Activated CD4-positive, alpha-beta T cell treated with anti-CD3 and anti-CD28 coated beads, Interleukin-2, amount 10 ng/mL, durations not matched to agents 7 days and 5 days (primary cell): ENCODE measurements at regions of chr11 and their contacts with region 1.

Region 1: GRCh38 chr11:15074206-15075161 is 1.1 kb downstream of the CALCB start:
- DNase-seq: peak; percentile 87
- H3K4me3 Mint-ChIP-seq: peak overlapping the region; percentile 72
- H3K27ac Mint-ChIP-seq: peak overlapping the region; percentile 55
- H3K4me1 Mint-ChIP-seq: peaks cover 19% of the 10 kb centered on the region
- H3K27me3 Mint-ChIP-seq: peaks cover 18% of the 10 kb centered on the region

Region 2: DNA sequence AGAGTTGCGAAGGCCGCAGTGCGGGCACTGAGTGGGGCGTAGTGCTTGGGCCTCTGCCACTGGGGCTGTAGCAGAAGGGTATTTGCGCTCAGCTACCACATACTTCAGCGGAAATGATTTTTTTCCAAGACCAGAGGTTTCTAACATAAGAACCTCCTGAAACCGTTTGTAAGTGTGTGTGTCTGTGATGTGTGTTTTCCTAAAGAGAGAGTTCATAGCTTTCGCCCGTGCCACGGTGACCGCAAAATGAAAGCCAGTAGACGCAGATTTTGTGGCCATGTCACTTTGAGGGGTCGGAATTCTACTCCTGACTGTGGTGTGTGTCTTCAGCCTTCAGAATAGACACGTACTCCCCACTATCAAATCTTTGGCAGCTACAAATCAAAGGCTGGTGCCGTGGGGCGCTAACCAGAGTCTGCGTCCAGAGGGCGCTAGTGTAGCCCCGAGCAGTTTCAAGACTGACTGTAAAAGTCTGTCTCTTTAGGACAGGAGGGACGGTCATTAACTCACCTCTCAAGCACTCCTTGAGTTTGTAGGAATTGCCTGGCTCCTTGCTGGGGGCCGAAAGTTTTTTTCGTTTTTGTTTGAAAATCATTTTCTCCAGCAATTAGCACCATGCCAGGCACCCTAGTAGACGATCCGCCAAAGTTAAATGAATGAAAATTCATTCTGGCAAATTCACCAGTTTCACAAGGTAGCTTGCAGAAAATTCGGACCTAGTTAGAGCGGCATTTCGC is 99.8 kb before region 1 on chr11:
- CTCF ChIA-PET with region 1: interaction called, 15 read pairs
- POLR2A ChIA-PET with region 1: no interaction called
- DNase-seq: peak; percentile 66
- H3K4me3 Mint-ChIP-seq: peak overlapping the region; percentile 53
- H3K27ac Mint-ChIP-seq: peak overlapping the region; percentile 21
- H3K4me1 Mint-ChIP-seq: peaks cover 32% of the 10 kb centered on the region
- H3K27me3 Mint-ChIP-seq: peaks cover 77% of the 10 kb centered on the region

Region 3: GRCh38 chr11:15059132-15059915 is 15.2 kb before region 1 on chr11:
- CTCF ChIA-PET with region 1: interaction called, 17 read pairs
- POLR2A ChIA-PET with region 1: no interaction called
- DNase-seq: no peak
- H3K4me3 Mint-ChIP-seq: no peak overlapping the region
- H3K27ac Mint-ChIP-seq: no peak overlapping the region
- H3K4me1 Mint-ChIP-seq: no peaks in the 10 kb centered on the region
- H3K27me3 Mint-ChIP-seq: peaks cover 12% of the 10 kb centered on the region

Region 4: DNA sequence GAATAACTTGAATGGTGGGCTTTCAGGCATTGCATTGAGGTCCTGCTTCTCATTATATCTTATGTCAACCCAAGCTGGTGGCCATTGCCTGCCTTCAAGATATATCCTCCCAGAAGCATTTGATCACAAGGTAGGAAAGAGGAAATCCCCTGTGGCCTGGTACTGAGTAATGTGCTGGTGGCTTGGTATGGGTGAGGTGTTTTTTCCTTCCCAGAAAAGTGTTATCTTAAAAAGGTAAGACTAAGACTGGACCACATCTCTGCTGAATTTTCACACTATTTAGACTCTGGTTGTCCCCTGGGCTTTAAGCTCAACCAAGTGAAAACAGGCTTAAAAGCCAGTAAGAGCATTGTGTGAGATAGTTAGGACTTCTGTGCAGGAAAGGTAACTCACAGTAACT is 43.9 kb after region 1 on chr11:
- CTCF ChIA-PET with region 1: interaction called, 12 read pairs
- POLR2A ChIA-PET with region 1: no interaction called
- DNase-seq: peak; percentile 12
- H3K4me3 Mint-ChIP-seq: no peak overlapping the region
- H3K27ac Mint-ChIP-seq: no peak overlapping the region
- H3K4me1 Mint-ChIP-seq: peaks cover 36% of the 10 kb centered on the region
- H3K27me3 Mint-ChIP-seq: peaks cover 37% of the 10 kb centered on the region

Region 5: GRCh38 chr11:15276621-15277020 is 202.1 kb after region 1 on chr11:
- CTCF ChIA-PET with region 1: no interaction called
- POLR2A ChIA-PET with region 1: no interaction called
- DNase-seq: no peak
- H3K4me3 Mint-ChIP-seq: no peak overlapping the region
- H3K27ac Mint-ChIP-seq: no peak overlapping the region
- H3K4me1 Mint-ChIP-seq: no peaks in the 10 kb centered on the region
- H3K27me3 Mint-ChIP-seq: peaks cover 7% of the 10 kb centered on the region

Region 6: GRCh38 chr11:15434529-15434928 is 360.0 kb after region 1 on chr11:
- CTCF ChIA-PET with region 1: no interaction called
- POLR2A ChIA-PET with region 1: no interaction called
- DNase-seq: no peak
- H3K4me3 Mint-ChIP-seq: no peak overlapping the region
- H3K27ac Mint-ChIP-seq: no peak overlapping the region
- H3K4me1 Mint-ChIP-seq: no peaks in the 10 kb centered on the region
- H3K27me3 Mint-ChIP-seq: no peaks in the 10 kb centered on the region

Region 7: DNA sequence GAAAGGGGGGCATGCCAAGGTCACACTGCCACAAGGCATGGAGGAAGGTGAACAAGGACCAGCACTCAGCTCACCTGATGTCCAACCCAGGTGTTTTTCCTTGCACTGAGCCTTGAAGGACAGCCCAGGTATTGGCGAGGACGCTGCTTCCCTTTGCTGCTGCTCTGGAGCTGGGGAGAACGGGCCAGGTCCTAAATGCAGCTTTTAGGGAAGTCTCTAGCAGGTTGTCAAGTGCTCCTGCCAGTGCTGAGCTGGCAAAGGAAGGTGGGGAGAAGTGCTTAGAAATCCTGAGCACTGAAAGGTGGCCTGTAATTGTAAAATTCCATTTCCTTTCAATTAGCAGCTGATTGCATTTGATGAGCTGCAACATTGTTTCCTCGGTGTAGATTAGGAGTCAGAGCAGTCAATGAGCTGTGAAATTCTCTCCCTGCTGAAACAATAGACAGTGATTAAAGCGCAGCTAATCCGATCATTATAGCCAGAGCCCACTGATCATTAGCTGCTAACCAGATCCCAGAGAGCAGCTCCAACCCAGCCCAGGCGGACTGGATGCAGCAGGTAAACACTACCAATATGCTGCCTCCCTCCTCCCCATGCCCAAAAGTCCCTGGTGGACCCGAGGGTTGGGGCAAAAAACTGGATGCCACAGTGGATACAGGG is 547.9 kb after region 1 on chr11:
- CTCF ChIA-PET with region 1: no interaction called
- POLR2A ChIA-PET with region 1: no interaction called
- DNase-seq: no peak
- H3K4me3 Mint-ChIP-seq: no peak overlapping the region
- H3K27ac Mint-ChIP-seq: no peak overlapping the region
- H3K4me1 Mint-ChIP-seq: no peaks in the 10 kb centered on the region
- H3K27me3 Mint-ChIP-seq: peaks cover 2% of the 10 kb centered on the region